Motor neuron (in vitro differentiated cells): ENCODE measurements at regions of chr1 and their contacts with region 1.

Region 1: GRCh38 chr1:10796019-10796944 is at the start of gene CASZ1:
- ATAC-seq: peak; percentile 71 to 88 (median 78)
- H3K4me3 ChIP-seq: peak within 1 kb of the TSS; percentile 35 to 64 (median 54)
- H3K27ac ChIP-seq: no peak within 1 kb of the TSS
- H3K4me1 ChIP-seq: peaks cover 11 to 31% of the 10 kb centered on the region in 2 donors
- total RNA-seq, gene CASZ1: 0.46 to 15.1 (median 6.4) TPM

Region 2: GRCh38 chr1:10694633-10695627 is 101.4 kb before region 1 on chr1:
- in situ Hi-C with region 1: loop called in 1 of 9 experiments (anchors 25 kb)
- ATAC-seq: peak; percentile 83 to 89 (median 87)
- H3K4me3 ChIP-seq: peak overlapping the region; percentile 35 to 72 (median 55)
- H3K27ac ChIP-seq: peak overlapping the region in 1 of 2 donors; percentile 29
- H3K4me1 ChIP-seq: peaks cover 3 to 14% of the 10 kb centered on the region in 2 donors

Region 3: DNA sequence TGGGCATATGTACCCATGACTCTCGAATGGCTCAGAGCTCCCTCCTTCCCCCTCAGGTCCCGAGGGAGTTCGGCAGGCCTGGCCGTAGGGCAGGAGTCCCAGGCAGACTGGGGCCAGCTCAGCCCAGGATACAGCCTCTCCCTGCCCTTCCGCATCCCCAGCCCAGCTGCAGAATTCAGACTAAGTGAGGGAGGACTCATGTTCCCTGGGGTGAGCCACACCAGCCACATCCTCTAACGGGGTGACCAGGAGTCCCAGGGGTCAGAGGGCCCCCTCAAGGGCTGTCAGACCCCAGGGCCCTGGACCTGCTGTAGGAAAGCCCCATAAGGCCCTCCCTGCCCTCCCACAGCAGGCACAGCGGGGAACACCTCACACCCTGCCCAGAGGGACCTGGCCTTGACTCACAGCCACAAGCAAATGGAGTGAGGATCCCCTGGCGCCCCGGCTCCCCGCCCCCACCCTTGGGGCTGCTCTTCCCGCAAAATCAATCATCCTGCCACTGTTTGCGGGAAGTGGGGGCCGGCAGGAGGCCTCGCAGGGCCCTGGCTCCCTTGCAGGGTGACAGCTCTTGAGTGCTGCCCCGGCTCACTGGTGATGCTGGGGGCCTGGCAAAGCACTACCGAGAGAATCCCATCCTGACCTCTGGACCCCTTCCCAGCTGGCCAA is 101.9 kb after region 1 on chr1:
- in situ Hi-C with region 1: loop called in 1 of 9 experiments (anchors 25 kb)
- ATAC-seq: peak; percentile 38 to 83 (median 72)
- H3K4me3 ChIP-seq: no peak overlapping the region
- H3K27ac ChIP-seq: peak overlapping the region; percentile 79 to 80
- H3K4me1 ChIP-seq: peaks cover 52 to 53% of the 10 kb centered on the region in 2 donors